ENCODE measurements at regions of chr5 and their contacts with region 1.

Region 1: DNA sequence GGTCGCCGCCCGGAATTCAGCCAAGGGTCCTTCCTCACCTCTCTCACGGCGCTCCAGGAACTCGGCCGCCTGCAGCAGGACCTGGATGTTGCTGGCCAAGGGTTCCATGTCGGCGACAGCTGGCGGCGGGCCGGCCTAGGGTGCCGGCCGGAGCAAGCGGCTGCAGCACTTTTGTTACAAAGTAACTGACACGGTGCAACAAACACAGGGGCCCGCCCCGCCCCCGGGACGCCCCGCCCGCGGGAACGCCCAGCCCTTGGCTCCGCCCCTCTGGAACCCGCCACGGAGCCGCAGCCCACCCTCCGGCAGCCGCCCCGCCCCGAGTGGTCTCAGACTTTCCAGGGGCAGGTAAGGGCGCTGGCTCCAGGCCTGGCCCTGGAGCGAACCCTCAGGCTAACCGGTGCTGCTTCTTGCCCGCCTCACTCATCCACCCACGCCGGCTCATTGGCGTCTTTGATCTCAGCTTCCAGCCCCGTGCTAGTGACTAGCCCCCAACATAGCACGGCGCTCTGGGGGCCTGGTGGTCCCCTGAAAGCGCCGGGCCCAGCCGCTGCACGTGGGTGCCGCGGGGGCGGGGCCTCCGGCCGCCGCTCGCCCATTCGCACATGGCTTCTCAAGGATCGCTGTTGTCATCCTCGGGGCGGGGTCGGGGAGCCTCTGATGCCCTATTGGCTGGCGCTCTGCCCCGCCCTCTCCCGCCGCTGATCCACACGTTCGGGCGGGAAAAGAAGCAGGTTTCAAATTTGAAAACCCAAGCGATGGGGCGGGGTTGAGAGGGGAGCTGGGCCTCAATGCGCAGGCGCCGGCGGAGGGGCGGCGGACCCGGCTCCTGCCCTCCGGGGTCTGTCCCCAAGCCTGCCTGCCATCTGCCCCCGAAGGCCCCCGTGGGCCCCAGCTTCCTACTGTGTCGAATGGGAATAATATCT is at the start of gene MXD3:
- DNase-seq: peak; percentile 90 to 95 (median 90)
- H3K4me3 ChIP-seq: peak within 1 kb of the TSS; percentile 40 to 97 (median 68)
- H3K4me3 Mint-ChIP-seq: peak within 1 kb of the TSS; percentile 89 to 98
- H3K27ac ChIP-seq: peak within 1 kb of the TSS; percentile 44 to 68
- H3K27ac Mint-ChIP-seq: peak within 1 kb of the TSS; percentile 73 to 95 (median 85)
- H3K4me1 ChIP-seq: peaks cover 63 to 72% of the 10 kb centered on the region in 2 donors
- H3K4me1 Mint-ChIP-seq: peaks cover 61% of the 10 kb centered on the region
- H3K27me3 ChIP-seq: no peaks in the 10 kb centered on the region
- H3K27me3 Mint-ChIP-seq: peaks cover 0 to 3% (median 0%) of the 10 kb centered on the region in 3 donors
- CTCF ChIP-seq: no peak
- polyA plus RNA-seq, gene MXD3: 21.5 to 61.9 (median 25.5) TPM

Region 2: DNA sequence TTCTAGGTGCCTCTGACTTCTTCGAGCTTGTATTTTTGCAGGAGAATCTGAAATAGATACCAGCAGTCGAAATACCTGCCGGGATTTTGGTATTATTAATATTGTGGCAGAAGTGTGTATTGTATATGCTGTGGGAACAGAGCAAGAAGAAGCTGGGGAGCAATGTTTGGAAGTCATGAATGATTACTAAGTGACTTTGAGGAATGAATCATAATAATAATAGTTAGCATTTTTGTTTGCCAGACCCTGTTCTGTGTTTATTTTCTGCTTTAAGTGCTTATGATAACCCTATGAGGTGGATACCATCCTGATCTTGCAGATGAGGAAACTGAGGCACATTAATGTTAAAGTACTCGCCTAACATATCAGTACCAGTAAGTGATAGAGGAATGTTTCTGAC is 40.9 kb before region 1 on chr5:
- intact Hi-C with region 1: no loop called
- DNase-seq: no peak
- H3K4me3 ChIP-seq: no peak overlapping the region
- H3K4me3 Mint-ChIP-seq: no peak overlapping the region
- H3K27ac ChIP-seq: no peak overlapping the region
- H3K27ac Mint-ChIP-seq: no peak overlapping the region
- H3K4me1 ChIP-seq: no peaks in the 10 kb centered on the region
- H3K4me1 Mint-ChIP-seq: no peaks in the 10 kb centered on the region
- H3K27me3 ChIP-seq: no peaks in the 10 kb centered on the region
- H3K27me3 Mint-ChIP-seq: peaks cover 0 to 2% (median 1%) of the 10 kb centered on the region in 3 donors
- CTCF ChIP-seq: no peak

Region 3: GRCh38 chr5:177351385-177352329 is 39.7 kb after region 1 on chr5 and contains the start of gene LMAN2:
- intact Hi-C with region 1: loop called (anchors 5 kb)
- DNase-seq: peak; percentile 92 to 94 (median 92)
- H3K4me3 ChIP-seq: peak within 1 kb of the TSS; percentile 76 to 99 (median 94)
- H3K4me3 Mint-ChIP-seq: peak within 1 kb of the TSS; percentile 97 to 99
- H3K27ac ChIP-seq: peak within 1 kb of the TSS; percentile 93 to 99
- H3K27ac Mint-ChIP-seq: peak within 1 kb of the TSS; percentile 98 to 100 (median 100)
- H3K4me1 ChIP-seq: peaks cover 66 to 75% of the 10 kb centered on the region in 2 donors
- H3K4me1 Mint-ChIP-seq: peaks cover 73% of the 10 kb centered on the region
- H3K27me3 ChIP-seq: no peaks in the 10 kb centered on the region
- H3K27me3 Mint-ChIP-seq: peaks cover 0 to 1% (median 0%) of the 10 kb centered on the region in 3 donors
- CTCF ChIP-seq: no peak
- polyA plus RNA-seq, gene LMAN2: 148 to 275 (median 259) TPM

Region 4: DNA sequence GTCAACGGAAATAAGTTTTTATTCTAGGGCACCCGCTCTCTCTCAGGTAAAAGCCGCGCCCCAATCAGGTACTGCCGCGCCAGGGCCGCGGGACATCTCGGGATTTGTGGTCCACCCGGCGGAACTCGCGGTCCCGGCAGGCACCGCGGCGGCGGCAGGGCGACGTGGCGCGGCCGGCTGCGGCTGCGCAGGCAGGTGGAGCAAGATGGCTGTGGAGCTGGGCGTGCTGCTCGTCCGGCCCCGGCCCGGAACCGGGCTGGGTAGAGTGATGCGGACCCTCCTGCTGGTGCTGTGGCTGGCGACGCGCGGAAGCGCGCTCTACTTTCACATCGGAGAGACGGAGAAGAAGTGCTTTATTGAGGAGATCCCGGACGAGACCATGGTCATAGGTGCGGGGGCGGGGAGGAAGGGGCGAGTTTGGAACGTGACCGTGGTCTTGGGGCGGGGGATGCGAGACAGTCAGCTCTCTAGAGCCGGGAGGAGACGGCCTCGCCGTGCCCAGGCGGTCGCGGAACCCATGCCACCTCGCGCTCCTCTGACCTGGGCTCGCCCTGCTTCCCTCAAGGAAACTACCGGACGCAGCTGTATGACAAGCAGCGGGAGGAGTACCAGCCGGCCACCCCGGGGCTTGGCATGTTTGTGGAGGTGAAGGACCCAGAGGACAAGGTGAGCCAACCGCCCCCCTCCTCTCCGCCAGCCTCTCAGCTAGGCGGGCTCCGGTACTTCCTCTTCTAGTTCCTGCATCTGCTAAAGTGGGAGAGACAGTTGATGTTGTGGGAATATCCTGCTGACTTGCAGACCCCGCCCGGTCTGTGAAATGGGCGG is 280.2 kb after region 1 on chr5 and contains the start of gene TMED9:
- intact Hi-C with region 1: loop called (anchors 10 kb)
- DNase-seq: peak; percentile 52 to 72 (median 72)
- H3K4me3 ChIP-seq: peak within 1 kb of the TSS; percentile 80 to 90 (median 87)
- H3K4me3 Mint-ChIP-seq: peak within 1 kb of the TSS; percentile 100
- H3K27ac ChIP-seq: peak within 1 kb of the TSS; percentile 48 to 85
- H3K27ac Mint-ChIP-seq: peak within 1 kb of the TSS; percentile 92 to 99 (median 97)
- H3K4me1 ChIP-seq: peaks cover 16 to 25% of the 10 kb centered on the region in 2 donors
- H3K4me1 Mint-ChIP-seq: peaks cover 25% of the 10 kb centered on the region
- H3K27me3 ChIP-seq: peaks cover 3 to 9% of the 10 kb centered on the region in 2 donors
- H3K27me3 Mint-ChIP-seq: peaks cover 10 to 25% (median 13%) of the 10 kb centered on the region in 3 donors
- CTCF ChIP-seq: no peak
- polyA plus RNA-seq, gene TMED9: 98.2 to 150 (median 136) TPM